ENCODE measurements at regions of chr16 and their contacts with region 1.

Region 1: DNA sequence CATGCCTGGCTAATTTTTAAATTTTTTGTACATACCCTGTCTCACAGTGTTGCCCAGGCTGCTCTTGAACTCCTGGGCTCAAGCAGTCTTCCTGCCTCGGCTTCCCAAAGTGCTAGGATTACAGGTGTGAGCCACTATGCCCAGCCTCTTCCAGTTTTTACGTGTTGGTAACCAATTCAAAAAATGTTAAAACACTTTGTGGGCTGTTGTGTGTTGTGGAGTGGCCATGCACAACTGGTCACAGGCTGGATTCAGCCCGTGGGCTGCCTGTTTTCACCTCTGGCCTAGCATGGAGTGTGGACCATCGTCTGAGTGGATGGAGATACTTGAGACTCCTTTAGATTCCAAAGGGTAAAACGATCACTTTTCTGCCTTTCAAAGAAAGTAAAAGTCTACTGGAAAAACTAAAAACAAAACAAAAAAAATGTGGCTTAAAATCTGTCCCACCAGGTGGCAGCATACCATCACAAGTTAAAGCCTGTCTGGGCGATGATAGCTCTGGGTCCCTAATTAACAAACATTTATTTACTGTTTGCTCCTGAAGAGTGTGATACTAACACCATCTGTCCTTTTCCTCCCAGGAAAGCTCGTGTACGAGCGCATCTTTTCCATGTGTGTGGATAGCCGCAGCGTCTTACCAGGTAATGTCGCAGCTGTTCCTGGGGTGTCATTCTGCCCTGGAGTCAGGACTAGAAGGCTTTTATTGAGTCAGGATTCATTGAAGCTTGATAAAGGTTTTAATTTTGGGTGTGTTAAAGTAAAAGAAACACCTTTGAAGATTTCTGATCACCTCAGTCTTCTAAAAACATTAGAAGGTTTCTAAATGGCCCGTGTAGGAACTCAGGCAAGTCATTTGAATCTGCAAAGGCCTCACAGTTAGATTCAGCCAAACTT is 45.8 kb downstream of the VPS35L start:
- DNase-seq: peak; percentile 36
- ATAC-seq: peak; percentile 57
- H3K4me3 ChIP-seq: no peak overlapping the region
- H3K27ac ChIP-seq: no peak overlapping the region
- H3K4me1 ChIP-seq: no peaks in the 10 kb centered on the region
- H3K27me3 ChIP-seq: no peaks in the 10 kb centered on the region
- CTCF ChIP-seq: peak; percentile 67
- POLR2A ChIP-seq: no peak
- RAD21 ChIP-seq: peak; percentile 75

Region 2: DNA sequence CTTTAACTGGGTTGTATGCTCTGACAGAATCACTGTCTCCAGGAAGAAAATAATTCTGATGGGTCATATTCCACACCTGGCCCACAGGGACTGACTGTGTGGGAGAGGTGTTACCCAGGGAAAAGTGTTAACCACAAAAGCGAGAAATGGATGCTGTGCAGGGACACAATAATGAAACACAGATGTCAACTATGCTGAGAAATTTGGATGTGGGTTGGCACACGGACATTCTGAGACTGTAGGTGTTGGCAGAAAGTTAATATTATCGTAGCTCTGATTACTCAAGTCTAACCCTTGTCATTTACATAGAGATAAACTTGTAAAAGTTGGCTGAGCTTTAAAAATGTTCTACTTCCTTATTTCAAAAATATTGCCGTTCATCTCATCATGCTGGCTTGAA is 164.1 kb before region 1 on chr16:
- CTCF ChIA-PET with region 1: no interaction called
- POLR2A ChIA-PET with region 1: no interaction called
- dilution Hi-C with region 1: no loop called
- in situ Hi-C with region 1: no loop called
- intact Hi-C with region 1: no loop called
- DNase-seq: no peak
- ATAC-seq: no peak
- H3K4me3 ChIP-seq: no peak overlapping the region
- H3K27ac ChIP-seq: no peak overlapping the region
- H3K4me1 ChIP-seq: no peaks in the 10 kb centered on the region
- H3K27me3 ChIP-seq: no peaks in the 10 kb centered on the region
- CTCF ChIP-seq: no peak
- POLR2A ChIP-seq: no peak
- RAD21 ChIP-seq: no peak

Region 3: DNA sequence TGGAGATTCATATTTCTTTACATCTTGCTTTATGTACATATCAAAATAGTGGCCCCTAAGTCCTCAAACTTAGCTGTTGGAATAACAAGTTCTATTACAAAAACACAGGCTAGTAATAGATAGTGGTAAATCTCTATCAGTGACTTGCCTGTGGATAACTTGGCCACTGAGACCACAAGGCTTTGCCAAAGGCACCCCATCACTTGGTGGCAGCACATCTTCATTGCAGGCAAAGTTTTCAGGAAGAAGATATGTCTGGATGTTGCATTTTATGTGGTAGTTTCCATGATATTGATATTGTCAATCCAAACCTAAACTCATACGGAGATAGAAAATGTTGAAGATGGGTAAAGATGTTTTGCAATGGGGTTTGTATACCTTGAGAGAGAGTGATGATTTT is 58.2 kb after region 1 on chr16:
- CTCF ChIA-PET with region 1: no interaction called
- POLR2A ChIA-PET with region 1: no interaction called
- dilution Hi-C with region 1: no loop called
- in situ Hi-C with region 1: no loop called
- intact Hi-C with region 1: loop called (anchors 5 kb)
- DNase-seq: peak; percentile 8
- ATAC-seq: no peak
- H3K4me3 ChIP-seq: no peak overlapping the region
- H3K27ac ChIP-seq: no peak overlapping the region
- H3K4me1 ChIP-seq: no peaks in the 10 kb centered on the region
- H3K27me3 ChIP-seq: no peaks in the 10 kb centered on the region
- CTCF ChIP-seq: no peak
- POLR2A ChIP-seq: no peak
- RAD21 ChIP-seq: peak; percentile 23; the same call in 1 of the 2 replicates

Region 4: DNA sequence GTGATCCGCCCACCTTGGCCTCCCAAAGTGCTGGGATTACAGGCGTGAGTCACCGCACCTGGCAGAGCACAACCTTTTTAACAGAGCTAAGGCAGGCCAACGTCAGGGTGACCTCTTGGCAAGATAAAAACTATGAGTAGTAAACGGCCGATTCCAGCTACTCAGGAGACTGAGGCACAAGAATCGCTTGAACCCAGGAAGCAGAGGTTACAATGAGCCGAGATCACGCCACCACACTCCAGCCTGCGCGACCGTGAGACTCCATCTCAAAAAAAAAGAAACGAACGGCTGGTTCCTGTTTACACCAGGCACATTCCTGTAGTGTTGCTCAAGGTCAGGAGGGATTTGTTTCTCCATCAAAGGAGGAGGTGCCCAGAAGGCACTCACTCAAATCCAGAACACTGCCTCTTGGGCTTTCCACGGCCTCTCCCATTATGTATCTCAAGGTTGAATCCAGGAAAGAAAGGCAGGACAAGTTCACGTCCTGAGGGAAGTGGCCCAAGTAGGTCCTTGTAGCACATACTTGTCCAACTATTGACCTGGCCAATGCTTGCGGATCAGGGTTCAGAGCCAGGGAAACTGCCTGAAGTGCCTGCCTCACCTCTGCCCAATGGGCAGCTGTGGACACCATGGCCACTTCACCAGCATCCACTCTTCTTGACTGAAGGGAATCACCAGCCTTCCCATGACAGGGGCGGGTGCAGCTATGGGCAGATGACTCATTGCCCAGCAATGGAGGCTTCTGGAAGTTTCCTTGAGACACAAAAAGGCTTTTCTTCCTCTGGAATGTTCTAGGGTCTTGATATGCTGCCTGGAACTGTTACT is 103.2 kb after region 1 on chr16:
- CTCF ChIA-PET with region 1: no interaction called
- POLR2A ChIA-PET with region 1: no interaction called
- dilution Hi-C with region 1: no loop called
- in situ Hi-C with region 1: no loop called
- intact Hi-C with region 1: no loop called
- DNase-seq: peak; percentile 77
- ATAC-seq: peak; percentile 70
- H3K4me3 ChIP-seq: no peak overlapping the region
- H3K27ac ChIP-seq: peak overlapping the region; percentile 70
- H3K4me1 ChIP-seq: peaks cover 10% of the 10 kb centered on the region
- H3K27me3 ChIP-seq: no peaks in the 10 kb centered on the region
- CTCF ChIP-seq: no peak
- POLR2A ChIP-seq: no peak
- RAD21 ChIP-seq: no peak

Region 5: GRCh38 chr16:19717771-19718602 is 116.7 kb after region 1 on chr16 and contains the starts of genes IQCK and KNOP1:
- CTCF ChIA-PET with region 1: no interaction called
- POLR2A ChIA-PET with region 1: no interaction called
- dilution Hi-C with region 1: no loop called
- in situ Hi-C with region 1: no loop called
- intact Hi-C with region 1: loop called (anchors 10 kb)
- DNase-seq: peak; percentile 87
- ATAC-seq: peak; percentile 92
- H3K4me3 ChIP-seq: peak within 1 kb of the TSS; percentile 97
- H3K27ac ChIP-seq: peak within 1 kb of the TSS; percentile 86
- H3K4me1 ChIP-seq: peaks cover 6% of the 10 kb centered on the region; the same call in 1 of the 2 replicates
- H3K27me3 ChIP-seq: no peaks in the 10 kb centered on the region
- CTCF ChIP-seq: 0 out of 2 replicates have a peak, but pooled peaks have one; percentile 16
- POLR2A ChIP-seq: no peak; the same call in 1 of the 2 replicates
- RAD21 ChIP-seq: 0 out of 2 replicates have a peak, but pooled peaks have one; percentile 7
- total RNA-seq, gene IQCK: 4.2 and 5.4 TPM in 2 replicates
- total RNA-seq, gene KNOP1: 8.4 and 10.6 TPM in 2 replicates

Region 6: DNA sequence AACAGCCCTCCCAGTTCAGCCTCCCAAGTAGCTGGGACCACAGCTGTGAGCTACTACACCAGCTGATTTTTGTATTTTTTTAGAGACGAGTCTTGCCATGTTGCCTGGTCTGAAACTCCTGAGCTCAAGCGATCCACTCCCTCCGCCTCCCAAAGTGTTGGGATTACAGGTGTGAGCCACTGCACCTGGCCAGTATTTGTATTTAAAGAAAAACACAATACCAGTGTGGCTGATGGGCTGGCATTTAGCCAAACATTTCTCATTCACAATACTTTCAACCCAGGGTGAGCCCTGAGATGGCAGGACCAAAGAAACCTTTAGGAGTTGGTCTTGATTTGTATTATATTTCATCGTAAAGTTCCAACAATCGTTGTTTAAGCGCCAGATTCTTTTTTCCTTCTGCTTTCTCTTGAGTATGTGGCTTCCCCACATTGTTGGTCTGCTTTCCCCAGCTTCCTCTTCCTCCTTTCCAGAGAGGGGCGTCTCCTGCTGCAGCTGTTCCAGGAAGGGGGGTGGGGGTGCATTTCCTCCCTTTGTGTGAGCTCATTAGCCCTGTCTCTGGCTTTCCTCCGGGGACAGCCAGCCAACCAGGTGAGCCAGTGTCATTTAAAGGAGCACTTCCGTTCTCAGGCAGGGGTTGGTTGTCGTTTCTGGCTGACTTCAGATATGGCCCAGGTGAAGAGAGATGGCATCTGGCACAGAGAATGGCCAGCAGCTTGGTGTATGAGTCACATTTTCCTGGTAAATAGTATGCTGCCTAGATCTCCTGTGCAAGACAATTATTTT is 203.4 kb after region 1 on chr16:
- CTCF ChIA-PET with region 1: no interaction called
- POLR2A ChIA-PET with region 1: no interaction called
- dilution Hi-C with region 1: no loop called
- in situ Hi-C with region 1: no loop called
- intact Hi-C with region 1: no loop called
- DNase-seq: no peak
- ATAC-seq: no peak
- H3K4me3 ChIP-seq: no peak overlapping the region
- H3K27ac ChIP-seq: no peak overlapping the region
- H3K4me1 ChIP-seq: peaks cover 5% of the 10 kb centered on the region
- H3K27me3 ChIP-seq: no peaks in the 10 kb centered on the region
- CTCF ChIP-seq: no peak
- POLR2A ChIP-seq: no peak
- RAD21 ChIP-seq: no peak